Activated CD4-positive, alpha-beta T cell treated with anti-CD3 and anti-CD28 coated beads for 36 hours (primary cell): ENCODE measurements at regions of chr4 and their contacts with region 1.

Region 1: DNA sequence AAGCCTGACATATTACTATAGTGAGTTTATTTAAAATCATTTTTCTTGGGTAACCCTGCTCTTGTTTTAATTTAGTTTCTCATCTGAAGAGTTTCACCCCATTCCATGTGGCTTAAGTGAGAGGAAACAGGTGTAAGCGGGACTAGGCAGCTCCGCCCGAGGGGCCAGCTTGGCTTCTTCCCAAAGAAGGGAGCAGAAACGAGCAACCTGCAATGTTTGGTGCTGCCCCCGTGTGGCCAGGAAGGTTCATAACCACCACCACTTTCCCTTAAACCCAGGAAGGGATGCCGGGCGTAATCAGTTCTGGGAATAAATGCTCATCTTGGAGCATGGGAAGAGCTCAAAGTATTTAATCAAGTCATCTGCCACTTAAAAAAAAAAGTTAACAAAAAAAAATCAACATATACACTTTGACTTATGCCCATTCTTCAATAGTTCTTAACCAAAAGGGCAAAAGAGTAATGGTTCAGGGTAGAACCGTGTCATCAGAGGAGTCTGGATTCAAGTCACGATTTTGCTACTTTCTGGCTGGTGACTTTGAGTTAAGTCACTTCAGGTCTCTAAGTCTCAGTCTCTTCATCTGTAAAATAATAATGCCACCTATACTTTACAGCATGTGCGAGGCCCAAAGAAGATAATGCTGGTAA is 147.9 kb downstream of the NSUN7 start:
- DNase-seq: peak; percentile 83
- ATAC-seq: peak; percentile 74
- H3K4me3 Mint-ChIP-seq: peak overlapping the region; percentile 26
- H3K27ac Mint-ChIP-seq: no peak overlapping the region
- H3K4me1 Mint-ChIP-seq: peaks cover 4% of the 10 kb centered on the region
- H3K27me3 Mint-ChIP-seq: peaks cover 2% of the 10 kb centered on the region

Region 2: GRCh38 chr4:40736910-40737309 is 160.8 kb before region 1 on chr4:
- CTCF ChIA-PET with region 1: interaction called, 13 read pairs
- POLR2A ChIA-PET with region 1: no interaction called
- intact Hi-C with region 1: loop called in 1 of 2 experiments (anchors 1 kb)
- DNase-seq: no peak
- ATAC-seq: peak; percentile 30
- H3K4me3 Mint-ChIP-seq: no peak overlapping the region
- H3K27ac Mint-ChIP-seq: no peak overlapping the region
- H3K4me1 Mint-ChIP-seq: peaks cover 3% of the 10 kb centered on the region
- H3K27me3 Mint-ChIP-seq: peaks cover 6% of the 10 kb centered on the region

Region 3: DNA sequence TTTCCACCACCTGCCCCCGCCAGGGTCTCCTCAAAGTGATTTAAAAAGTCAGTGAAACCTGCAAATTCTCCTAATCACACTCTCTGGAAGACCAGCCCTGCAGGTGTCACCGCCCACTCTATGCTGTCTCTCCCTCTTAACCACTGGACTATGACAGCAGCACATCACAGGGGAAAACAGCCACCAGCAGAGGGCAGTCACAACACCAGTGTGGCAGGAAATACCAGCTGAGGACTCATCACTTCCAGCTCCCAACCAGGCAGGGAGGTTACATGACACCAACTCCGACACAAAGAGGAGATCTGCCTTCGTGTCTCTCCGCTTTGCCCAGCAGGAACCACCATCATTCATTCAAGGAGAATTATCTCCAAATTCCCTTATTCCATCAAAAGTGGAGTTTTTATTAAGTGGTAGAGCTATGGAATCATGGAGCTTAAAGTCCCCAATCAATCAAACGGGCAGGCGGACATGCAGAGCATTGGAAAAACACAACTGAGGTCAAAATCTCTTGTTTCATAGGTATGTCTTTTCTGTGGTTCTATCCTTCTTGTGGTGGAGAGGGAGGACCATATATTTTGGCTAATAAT is 56.6 kb before region 1 on chr4:
- CTCF ChIA-PET with region 1: interaction called, 24 read pairs
- POLR2A ChIA-PET with region 1: no interaction called
- intact Hi-C with region 1: loop called (anchors 1 to 5 kb)
- DNase-seq: peak; percentile 93
- ATAC-seq: peak; percentile 97
- H3K4me3 Mint-ChIP-seq: no peak overlapping the region
- H3K27ac Mint-ChIP-seq: no peak overlapping the region
- H3K4me1 Mint-ChIP-seq: peaks cover 5% of the 10 kb centered on the region
- H3K27me3 Mint-ChIP-seq: peaks cover 6% of the 10 kb centered on the region

Region 4: GRCh38 chr4:40887288-40888131 is 10.2 kb before region 1 on chr4:
- CTCF ChIA-PET with region 1: interaction called, 10 read pairs
- POLR2A ChIA-PET with region 1: no interaction called
- intact Hi-C with region 1: no loop called
- DNase-seq: peak; percentile 16
- ATAC-seq: peak; percentile 85
- H3K4me3 Mint-ChIP-seq: no peak overlapping the region
- H3K27ac Mint-ChIP-seq: no peak overlapping the region
- H3K4me1 Mint-ChIP-seq: peaks cover 10% of the 10 kb centered on the region
- H3K27me3 Mint-ChIP-seq: peaks cover 10% of the 10 kb centered on the region

Region 5: DNA sequence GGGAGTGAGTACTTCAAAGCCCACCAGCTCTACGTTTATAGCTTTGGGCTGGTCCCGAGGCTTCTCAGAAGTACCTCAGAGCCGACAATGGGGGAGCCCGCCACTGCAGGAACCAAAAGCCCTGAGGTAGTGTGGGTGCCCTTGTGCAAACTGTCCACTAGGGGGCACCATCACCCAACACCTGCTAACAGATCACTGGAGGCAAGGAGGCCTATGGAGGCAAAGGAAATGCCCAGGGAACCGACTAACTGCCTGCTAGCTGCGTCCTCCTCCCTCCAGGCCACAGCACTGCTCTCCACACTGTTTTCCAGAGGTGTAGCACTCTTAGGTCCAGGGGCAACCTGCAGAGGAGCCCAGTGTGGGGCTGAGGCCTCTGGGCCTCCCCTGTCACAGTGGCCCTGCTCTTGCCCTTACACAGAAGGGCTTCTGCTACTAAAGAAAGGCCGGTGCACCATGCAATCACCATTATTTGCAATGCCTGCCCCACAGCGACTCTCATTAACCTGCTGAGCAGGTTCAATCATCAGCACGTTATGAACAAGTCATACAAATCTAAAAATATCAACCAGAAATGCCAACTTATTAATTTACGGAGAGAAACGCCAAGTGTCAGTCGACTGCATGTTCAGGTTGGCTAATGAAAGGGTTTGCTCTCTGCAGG is 11.2 kb after region 1 on chr4:
- CTCF ChIA-PET with region 1: interaction called, 16 read pairs
- POLR2A ChIA-PET with region 1: no interaction called
- intact Hi-C with region 1: no loop called
- DNase-seq: peak; percentile 90
- ATAC-seq: peak; percentile 85
- H3K4me3 Mint-ChIP-seq: peak overlapping the region; percentile 26
- H3K27ac Mint-ChIP-seq: peak overlapping the region; percentile 95
- H3K4me1 Mint-ChIP-seq: peaks cover 36% of the 10 kb centered on the region
- H3K27me3 Mint-ChIP-seq: no peaks in the 10 kb centered on the region

Region 6: GRCh38 chr4:40916880-40917279 is 19.2 kb after region 1 on chr4:
- CTCF ChIA-PET with region 1: interaction called, 12 read pairs
- POLR2A ChIA-PET with region 1: no interaction called
- intact Hi-C with region 1: no loop called
- DNase-seq: peak; percentile 80
- ATAC-seq: peak; percentile 76
- H3K4me3 Mint-ChIP-seq: no peak overlapping the region
- H3K27ac Mint-ChIP-seq: peak overlapping the region; percentile 28
- H3K4me1 Mint-ChIP-seq: peaks cover 38% of the 10 kb centered on the region
- H3K27me3 Mint-ChIP-seq: no peaks in the 10 kb centered on the region

Region 7: DNA sequence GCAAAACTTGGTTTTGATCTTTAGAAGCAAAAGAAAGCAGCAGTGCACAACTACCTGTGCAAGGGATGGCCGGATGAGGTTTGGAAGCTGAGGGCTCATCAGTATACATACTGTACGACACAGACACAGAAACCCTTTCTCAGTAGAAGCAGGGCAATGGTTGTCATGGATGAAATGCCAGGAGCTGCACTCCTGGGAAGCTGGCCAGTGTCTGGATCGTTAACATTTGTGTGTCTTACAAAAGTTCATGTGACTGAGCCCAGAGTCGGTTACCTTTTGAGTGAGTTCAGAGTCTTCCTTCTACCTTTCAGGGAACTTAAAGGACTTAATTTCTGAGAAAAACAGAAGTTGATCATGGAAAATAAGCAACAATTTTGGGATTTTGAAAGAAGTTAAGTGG is 86.4 kb after region 1 on chr4:
- CTCF ChIA-PET with region 1: no interaction called
- POLR2A ChIA-PET with region 1: no interaction called
- intact Hi-C with region 1: no loop called
- DNase-seq: no peak
- ATAC-seq: no peak
- H3K4me3 Mint-ChIP-seq: no peak overlapping the region
- H3K27ac Mint-ChIP-seq: no peak overlapping the region
- H3K4me1 Mint-ChIP-seq: no peaks in the 10 kb centered on the region
- H3K27me3 Mint-ChIP-seq: peaks cover 6% of the 10 kb centered on the region